BJ (cell line): ENCODE measurements at regions of chrX and their contacts with region 1.

Region 1: DNA sequence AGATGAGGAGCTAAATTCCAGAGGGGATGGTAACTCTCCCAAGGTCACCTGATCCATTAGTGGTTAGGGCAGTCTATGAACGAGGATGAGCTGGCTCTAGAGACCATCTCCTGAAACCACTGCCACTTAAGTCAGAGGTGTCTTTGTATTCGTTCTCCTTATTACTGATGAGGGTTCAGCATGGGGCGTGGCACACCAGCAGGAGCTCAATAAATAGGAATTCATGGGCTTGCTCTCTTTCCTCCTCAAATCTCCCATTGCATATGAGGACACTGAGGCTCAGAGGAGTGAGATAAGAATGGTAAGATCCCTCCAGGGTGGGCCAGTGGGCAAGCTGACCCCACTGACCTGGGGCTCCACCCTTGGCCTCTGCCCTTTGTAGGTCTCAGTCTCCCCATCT is 1.7 kb upstream of the GATA1 start:
- DNase-seq: no peak
- H3K4me3 ChIP-seq: no peak overlapping the region
- H3K27me3 ChIP-seq: no peaks in the 10 kb centered on the region
- CTCF ChIP-seq: no peak

Region 2: DNA sequence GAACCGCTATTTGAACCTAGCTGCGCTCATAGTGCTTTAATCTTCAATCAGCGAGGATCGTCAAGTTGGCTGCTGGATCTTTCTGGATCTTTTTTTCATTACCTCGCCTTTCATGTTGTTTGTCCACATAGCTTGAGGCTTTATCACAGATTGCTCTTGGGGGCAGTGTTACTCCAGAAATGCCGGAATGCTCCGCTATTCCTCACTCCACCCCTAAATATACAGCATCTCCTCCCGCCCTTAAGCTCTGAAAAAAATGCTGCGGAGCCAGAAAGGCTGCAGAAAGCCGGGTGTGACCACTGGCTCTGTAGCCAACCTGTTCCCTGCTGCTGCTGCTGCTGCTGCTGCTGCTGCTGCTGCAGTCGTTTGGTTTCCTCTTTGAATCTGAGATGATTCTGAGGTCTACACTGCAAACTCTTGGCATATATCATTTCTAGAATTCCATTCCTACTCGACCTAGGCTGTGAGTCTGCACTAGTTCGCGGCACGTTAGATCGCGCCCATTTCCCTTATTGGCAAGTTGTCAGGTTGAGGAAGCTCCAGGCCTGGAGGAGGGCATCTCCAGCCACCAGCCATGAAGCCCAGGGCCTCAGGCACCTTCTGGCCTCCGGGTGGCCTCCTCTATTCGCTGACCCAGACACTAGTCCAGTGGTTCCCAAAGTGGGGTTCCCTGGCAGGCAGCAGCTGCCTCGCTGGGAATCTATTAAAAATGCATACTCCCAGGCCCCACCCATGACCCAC is 153.2 kb before region 1 on chrX:
- CTCF ChIA-PET with region 1: no interaction called
- POLR2A ChIA-PET with region 1: no interaction called
- DNase-seq: peak; percentile 53
- H3K4me3 ChIP-seq: no peak overlapping the region
- H3K27me3 ChIP-seq: no peaks in the 10 kb centered on the region
- CTCF ChIP-seq: peak; percentile 51

Region 3: DNA sequence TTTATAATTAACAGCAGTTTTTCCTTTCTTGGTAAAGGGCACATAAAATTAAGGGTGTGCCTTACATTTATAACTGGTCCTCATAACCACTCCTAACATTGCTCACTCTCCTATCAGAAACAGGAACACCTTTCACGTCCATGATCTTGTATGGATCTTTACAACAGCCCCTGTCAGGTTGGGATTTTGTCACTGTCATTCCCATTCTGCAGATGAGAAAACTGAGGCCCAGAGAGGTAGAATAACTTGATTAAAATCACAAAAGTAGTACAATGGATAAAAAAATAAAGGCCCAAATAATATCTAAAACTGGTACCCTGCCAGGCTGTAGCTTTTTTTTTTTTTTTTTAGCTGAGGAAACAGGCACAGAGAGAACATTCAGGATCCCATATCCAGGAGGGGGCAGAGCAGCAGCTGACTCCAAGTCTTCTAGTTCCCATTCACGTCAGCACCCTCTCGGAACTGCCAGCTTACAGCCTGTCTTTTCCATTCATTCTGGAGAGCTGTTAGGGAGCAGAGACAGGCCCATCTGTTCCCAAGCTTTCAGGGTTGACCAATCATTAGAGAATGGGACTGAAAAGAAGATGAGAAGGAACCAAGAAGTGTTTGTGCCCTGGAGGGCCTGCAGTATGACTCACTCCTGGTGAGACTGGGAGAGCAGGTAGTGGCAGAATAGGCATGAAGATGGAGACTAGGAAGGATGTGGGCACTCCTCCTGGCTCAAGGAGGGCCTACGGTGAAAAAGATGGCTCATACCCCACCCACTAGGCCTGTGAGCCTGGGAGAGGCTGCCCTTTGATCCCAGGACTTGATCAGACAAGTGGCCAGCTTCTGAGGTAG is 80.9 kb before region 1 on chrX:
- CTCF ChIA-PET with region 1: no interaction called
- POLR2A ChIA-PET with region 1: interaction called, 11 read pairs
- DNase-seq: peak; percentile 11
- H3K4me3 ChIP-seq: no peak overlapping the region
- H3K27me3 ChIP-seq: no peaks in the 10 kb centered on the region
- CTCF ChIP-seq: 0 out of 2 replicates have a peak, but pooled peaks have one; percentile 5